Activated CD4-positive, alpha-beta T cell treated with anti-CD3 and anti-CD28 coated beads for 36 hours (primary cell): ENCODE measurements at regions of chr11 and their contacts with region 1.

Region 1: DNA sequence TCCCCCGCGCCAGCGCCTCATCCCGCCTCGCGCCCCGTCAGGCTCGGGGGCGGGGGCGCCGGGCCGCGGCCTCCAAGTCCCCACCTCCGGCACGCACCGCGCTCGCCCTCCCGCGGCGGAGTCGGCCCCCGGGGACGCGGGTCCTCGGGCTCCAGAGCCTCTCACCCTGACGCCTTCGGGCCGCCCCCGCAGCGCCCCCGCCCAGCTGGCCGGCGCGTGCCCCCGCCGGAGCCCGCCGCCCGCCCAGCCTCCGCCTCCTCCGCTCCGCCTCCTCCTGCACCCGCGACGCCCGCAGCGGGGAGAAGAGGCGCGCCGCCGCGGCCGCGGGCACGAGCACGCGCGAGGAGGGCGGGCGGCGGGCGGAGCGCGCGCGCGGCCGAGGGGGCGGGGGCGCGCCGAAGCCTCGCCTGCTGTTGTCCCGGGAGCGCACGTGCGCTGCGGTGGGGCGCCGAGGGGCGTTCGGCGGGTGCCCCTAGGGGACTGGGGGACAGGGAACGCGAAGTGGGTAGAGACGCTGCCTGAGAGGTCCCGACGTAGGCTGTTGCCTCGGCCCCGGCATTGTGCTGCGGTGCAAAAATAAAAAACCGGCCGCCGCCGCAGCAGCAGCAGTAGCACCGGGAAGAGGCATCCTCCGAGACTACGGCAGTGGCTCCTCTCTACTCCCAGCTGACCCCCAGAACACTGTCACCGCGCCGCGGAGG is 87.4 kb upstream of the ARHGAP32 start:
- DNase-seq: peak; percentile 79
- ATAC-seq: peak; percentile 30
- H3K4me3 Mint-ChIP-seq: peak overlapping the region; percentile 76
- H3K27ac Mint-ChIP-seq: peak overlapping the region; percentile 90
- H3K4me1 Mint-ChIP-seq: peaks cover 41% of the 10 kb centered on the region
- H3K27me3 Mint-ChIP-seq: peaks cover 14% of the 10 kb centered on the region

Region 2: DNA sequence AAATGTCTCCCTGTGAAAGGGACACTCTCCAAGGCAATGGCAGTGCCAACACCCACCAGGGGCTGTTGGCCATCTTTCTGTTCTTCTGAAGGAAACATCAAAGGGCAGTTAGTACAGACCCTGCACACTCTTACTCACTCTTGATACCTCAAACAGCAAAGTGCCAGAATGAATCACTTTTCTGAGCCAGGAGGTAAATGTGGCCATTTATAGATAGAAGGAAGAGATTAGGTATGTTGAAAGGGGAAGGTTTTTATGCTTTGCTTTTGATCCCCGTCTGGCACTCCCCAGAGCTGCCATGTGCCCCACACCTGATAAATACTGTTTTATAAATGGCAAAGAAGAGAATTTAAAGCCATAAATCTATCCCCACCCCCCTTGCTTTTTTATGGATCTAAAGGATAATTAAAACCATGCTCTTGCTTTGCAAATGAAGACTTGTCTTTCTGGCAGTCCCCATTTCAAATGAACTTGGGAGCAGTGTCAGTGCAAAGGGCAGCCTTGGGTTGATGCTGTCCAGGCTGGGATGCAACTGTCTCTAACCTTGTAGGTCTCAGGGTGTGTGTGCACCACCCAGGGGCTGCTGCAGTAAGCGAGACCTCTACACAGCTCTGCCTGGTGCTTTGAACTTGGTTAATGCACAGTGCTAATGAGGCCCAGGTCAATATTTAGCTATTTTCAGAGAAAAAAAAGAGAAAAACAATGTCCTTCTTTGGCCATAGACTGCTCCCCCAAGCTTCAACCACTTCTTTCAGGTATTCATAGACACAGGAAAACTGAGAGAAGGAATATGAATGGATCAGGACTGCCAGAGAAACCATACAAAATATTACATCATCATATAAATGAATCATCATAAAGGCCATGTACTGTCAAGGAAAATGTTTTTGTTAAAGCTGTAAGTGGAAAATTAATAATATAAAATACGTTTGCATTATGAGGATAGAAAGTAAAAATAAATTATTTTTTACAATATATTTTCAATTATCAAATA is 899.6 kb before region 1 on chr11:
- CTCF ChIA-PET with region 1: no interaction called
- POLR2A ChIA-PET with region 1: no interaction called
- intact Hi-C with region 1: no loop called
- DNase-seq: peak; percentile 56
- ATAC-seq: peak; percentile 99
- H3K4me3 Mint-ChIP-seq: peak overlapping the region; percentile 2
- H3K27ac Mint-ChIP-seq: peak overlapping the region; percentile 61
- H3K4me1 Mint-ChIP-seq: peaks cover 40% of the 10 kb centered on the region
- H3K27me3 Mint-ChIP-seq: no peaks in the 10 kb centered on the region

Region 3: GRCh38 chr11:128965485-128965884 is 314.0 kb before region 1 on chr11:
- CTCF ChIA-PET with region 1: no interaction called
- POLR2A ChIA-PET with region 1: no interaction called
- intact Hi-C with region 1: loop called in 1 of 2 experiments (anchors 2 kb)
- DNase-seq: no peak
- ATAC-seq: peak; percentile 88
- H3K4me3 Mint-ChIP-seq: no peak overlapping the region
- H3K27ac Mint-ChIP-seq: no peak overlapping the region
- H3K4me1 Mint-ChIP-seq: peaks cover 27% of the 10 kb centered on the region
- H3K27me3 Mint-ChIP-seq: no peaks in the 10 kb centered on the region

Region 4: DNA sequence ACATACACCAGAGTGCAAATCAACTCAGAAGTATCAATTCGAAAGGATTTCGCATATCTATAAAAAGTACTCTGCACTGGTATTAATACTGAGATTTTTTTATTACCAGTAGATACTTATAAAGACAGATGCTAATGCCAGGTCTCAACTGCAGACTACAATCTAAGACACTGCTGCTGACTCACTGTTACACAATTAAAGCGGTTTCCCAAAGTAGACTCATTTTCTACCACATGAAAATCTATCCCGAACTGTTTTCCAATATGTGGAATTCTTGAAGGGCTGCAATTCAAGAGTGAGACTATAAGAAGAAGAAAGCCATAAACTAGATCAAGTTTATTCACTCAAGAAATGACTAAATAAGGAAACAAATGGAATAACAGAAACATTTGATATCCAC is 30.1 kb before region 1 on chr11:
- CTCF ChIA-PET with region 1: no interaction called
- POLR2A ChIA-PET with region 1: no interaction called
- intact Hi-C with region 1: loop called in 1 of 2 experiments (anchors 1 kb)
- DNase-seq: no peak
- ATAC-seq: no peak
- H3K4me3 Mint-ChIP-seq: no peak overlapping the region
- H3K27ac Mint-ChIP-seq: no peak overlapping the region
- H3K4me1 Mint-ChIP-seq: peaks cover 38% of the 10 kb centered on the region
- H3K27me3 Mint-ChIP-seq: no peaks in the 10 kb centered on the region

Region 5: DNA sequence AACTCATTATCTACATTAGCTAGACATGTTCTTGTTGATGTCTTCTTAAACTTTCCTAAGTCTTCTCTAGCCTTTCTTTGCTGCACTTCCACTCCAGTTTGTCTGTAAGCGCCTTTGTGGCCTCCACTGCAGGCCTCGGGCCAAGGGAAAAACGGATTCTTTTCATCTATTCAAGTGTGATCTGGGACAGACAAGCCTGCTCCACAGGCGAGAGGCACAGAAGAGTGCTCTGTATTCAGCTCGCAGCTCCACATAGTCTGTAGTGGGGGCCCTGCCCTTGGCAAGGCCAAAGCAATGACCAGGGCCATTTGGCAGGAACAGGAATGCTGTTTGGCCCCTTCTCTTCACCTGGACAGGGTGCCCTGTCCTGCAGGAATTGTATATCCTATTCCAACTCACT is 12.1 kb after region 1 on chr11:
- CTCF ChIA-PET with region 1: no interaction called
- POLR2A ChIA-PET with region 1: no interaction called
- intact Hi-C with region 1: no loop called
- DNase-seq: no peak
- ATAC-seq: no peak
- H3K4me3 Mint-ChIP-seq: no peak overlapping the region
- H3K27ac Mint-ChIP-seq: no peak overlapping the region
- H3K4me1 Mint-ChIP-seq: peaks cover 4% of the 10 kb centered on the region
- H3K27me3 Mint-ChIP-seq: peaks cover 15% of the 10 kb centered on the region

Region 6: DNA sequence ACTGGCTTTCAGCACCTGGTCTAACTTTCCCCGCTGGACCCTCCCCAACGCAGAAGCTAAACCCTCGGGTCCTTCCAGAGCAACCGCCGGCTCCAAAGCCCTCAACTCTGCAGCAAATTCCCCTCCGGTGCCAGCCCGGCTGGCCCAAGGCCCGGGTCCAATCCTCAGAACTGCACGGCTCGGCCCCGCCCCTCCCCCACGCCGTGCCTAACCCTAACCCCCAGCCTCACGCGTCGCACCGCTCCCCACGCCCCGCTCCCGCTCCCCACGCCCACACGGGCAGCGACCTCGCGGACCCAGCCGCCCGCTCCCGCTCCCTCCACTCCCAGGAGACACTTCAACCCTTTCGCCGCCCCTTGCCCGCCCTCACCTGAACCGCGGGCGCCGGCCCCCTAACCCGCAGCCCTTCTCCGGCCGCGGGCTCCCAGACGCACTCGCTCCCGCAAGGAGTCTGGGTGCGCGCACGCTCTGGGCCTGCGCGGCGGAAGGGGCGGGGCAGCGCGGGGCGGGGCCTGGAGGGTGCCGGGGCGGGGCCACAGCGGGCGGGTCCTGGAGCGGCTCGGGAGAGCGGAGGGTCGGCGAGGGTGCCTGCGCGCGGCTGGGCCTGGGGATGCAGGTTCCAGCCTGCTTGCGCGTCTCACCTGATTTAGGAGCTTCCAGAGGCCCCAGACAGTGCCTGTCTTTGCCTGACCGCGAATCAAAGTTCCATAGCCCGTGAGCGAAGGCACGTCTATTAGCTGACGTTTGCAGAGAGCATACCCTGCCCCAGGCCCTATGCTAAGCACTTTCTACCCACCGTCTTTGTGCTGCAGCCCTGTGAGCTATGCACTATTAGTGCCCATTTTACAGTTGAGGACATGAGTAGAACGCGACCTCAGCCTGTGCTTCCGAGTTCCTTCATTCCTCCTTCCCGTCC is 615.9 kb after region 1 on chr11 and contains the start of gene NFRKB:
- CTCF ChIA-PET with region 1: no interaction called
- POLR2A ChIA-PET with region 1: no interaction called
- intact Hi-C with region 1: loop called in 1 of 2 experiments (anchors 1 kb)
- DNase-seq: peak; percentile 94
- ATAC-seq: peak; percentile 99
- H3K4me3 Mint-ChIP-seq: peak within 1 kb of the TSS; percentile 84
- H3K27ac Mint-ChIP-seq: peak within 1 kb of the TSS; percentile 71
- H3K4me1 Mint-ChIP-seq: peaks cover 41% of the 10 kb centered on the region
- H3K27me3 Mint-ChIP-seq: no peaks in the 10 kb centered on the region
- total RNA-seq, gene NFRKB: 27.3 to 31.0 TPM

Region 7: GRCh38 chr11:130916238-130916855 is 1636.9 kb after region 1 on chr11 and contains the start of gene SNX19:
- CTCF ChIA-PET with region 1: no interaction called
- POLR2A ChIA-PET with region 1: no interaction called
- intact Hi-C with region 1: loop called in 1 of 2 experiments (anchors 5 kb)
- DNase-seq: peak; percentile 94
- ATAC-seq: peak; percentile 100
- H3K4me3 Mint-ChIP-seq: peak within 1 kb of the TSS; percentile 78
- H3K27ac Mint-ChIP-seq: peak within 1 kb of the TSS; percentile 84
- H3K4me1 Mint-ChIP-seq: peaks cover 32% of the 10 kb centered on the region
- H3K27me3 Mint-ChIP-seq: peaks cover 4% of the 10 kb centered on the region
- total RNA-seq, gene SNX19: 22.7 to 29.5 TPM